Activated CD4-positive, alpha-beta memory T cell treated with anti-CD3 and anti-CD28 coated beads, Interleukin-2, amount 10 ng/mL, durations not matched to agents 7 days and 5 days (primary cell): ENCODE measurements at regions of chr2 and their contacts with region 1.

Region 1: GRCh38 chr2:239934571-239935171 is 90.5 kb downstream of the NDUFA10 start:
- DNase-seq: peak; percentile 73
- H3K4me3 Mint-ChIP-seq: no peak overlapping the region
- H3K27ac Mint-ChIP-seq: no peak overlapping the region
- H3K4me1 Mint-ChIP-seq: peaks cover 9% of the 10 kb centered on the region
- H3K27me3 Mint-ChIP-seq: no peaks in the 10 kb centered on the region

Region 2: DNA sequence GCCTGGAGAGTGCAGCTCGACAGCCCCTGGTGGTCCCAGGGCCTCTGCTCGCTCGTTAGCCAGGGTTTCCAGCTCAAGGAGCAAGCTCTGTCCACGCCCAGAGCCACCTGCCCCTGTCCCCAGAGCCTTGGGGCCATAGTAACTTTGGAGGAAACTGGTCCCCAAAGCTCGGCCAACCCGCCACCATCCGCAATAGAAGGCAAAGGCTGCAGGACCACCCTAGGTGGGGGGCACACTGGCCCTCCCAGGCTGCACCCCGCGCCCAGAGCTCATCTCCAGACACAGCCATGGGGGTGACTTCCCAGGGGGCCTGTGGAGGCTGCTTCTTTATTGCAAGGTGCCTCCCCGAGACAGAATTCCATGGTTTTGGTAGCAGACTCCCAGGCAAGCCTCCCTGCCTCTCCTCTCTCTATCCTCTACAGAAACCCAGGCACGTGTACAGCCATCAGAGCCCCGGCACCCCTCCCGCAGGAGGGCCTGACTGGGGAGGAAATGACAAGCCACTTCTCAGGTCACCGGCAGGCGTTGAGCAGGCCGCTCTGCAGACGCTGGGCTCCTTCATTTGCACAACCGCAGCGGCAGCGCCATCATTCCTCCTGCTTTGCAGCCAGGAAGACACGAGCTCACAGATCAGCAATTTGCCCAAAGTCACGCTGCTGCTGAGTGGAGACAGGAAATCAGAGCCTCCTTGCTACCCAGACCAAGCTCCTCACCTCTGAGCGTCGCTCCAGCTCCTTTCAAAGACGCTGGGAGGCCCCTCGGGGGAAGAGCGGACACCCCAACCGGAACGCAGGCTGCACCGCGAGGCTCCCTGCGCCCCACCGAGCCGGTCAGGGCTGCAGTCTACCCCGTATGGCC is 10.3 kb after region 1 on chr2:
- CTCF ChIA-PET with region 1: interaction called, 14 read pairs
- POLR2A ChIA-PET with region 1: interaction called, 11 read pairs
- DNase-seq: peak; percentile 75
- H3K4me3 Mint-ChIP-seq: peak overlapping the region; percentile 14
- H3K27ac Mint-ChIP-seq: peak overlapping the region; percentile 85
- H3K4me1 Mint-ChIP-seq: peaks cover 12% of the 10 kb centered on the region
- H3K27me3 Mint-ChIP-seq: no peaks in the 10 kb centered on the region

Region 3: GRCh38 chr2:239991689-239992314 is 57.1 kb after region 1 on chr2:
- CTCF ChIA-PET with region 1: interaction called, 17 read pairs
- POLR2A ChIA-PET with region 1: no interaction called
- DNase-seq: peak; percentile 25
- H3K4me3 Mint-ChIP-seq: no peak overlapping the region
- H3K27ac Mint-ChIP-seq: no peak overlapping the region
- H3K4me1 Mint-ChIP-seq: no peaks in the 10 kb centered on the region
- H3K27me3 Mint-ChIP-seq: no peaks in the 10 kb centered on the region